ENCODE measurements at regions of chr11 and their contacts with region 1.

Region 1: DNA sequence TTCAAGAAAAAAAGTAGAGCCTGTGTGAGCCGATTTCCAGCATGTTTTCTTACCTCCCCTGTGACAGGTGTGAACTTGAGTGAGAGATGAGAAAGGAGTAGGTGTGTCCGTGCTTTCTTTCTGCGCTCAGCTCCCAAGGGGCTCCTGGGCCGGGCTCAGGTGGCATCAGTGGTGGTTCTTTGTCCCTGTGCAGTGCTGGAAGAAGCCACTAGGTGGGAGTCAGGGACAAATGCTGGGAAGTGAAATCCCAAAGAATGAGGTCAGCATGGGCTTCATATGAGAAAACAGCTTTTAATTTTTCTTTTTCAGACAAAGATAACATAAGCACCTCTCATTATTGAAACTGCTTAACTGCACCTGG is 57.8 kb downstream of the PPFIBP2 start:
- DNase-seq: peak; percentile 43 to 88
- H3K4me3 ChIP-seq: no peak overlapping the region
- H3K27ac ChIP-seq: no peak overlapping the region
- H3K4me1 ChIP-seq: peaks cover 11 to 32% (median 24%) of the 10 kb centered on the region in 4 experiments
- H3K27me3 ChIP-seq: no peaks in the 10 kb centered on the region
- CTCF ChIP-seq: peak; percentile 68 to 90 (median 89)
- EP300 ChIP-seq: no peak
- POLR2A ChIP-seq: no peak
- RAD21 ChIP-seq: peak; percentile 91

Region 2: GRCh38 chr11:7520981-7521487 is 50.6 kb before region 1 on chr11:
- CTCF ChIA-PET with region 1: interaction called, 22 read pairs
- POLR2A ChIA-PET with region 1: no interaction called
- DNase-seq: no peak
- H3K4me3 ChIP-seq: no peak overlapping the region
- H3K27ac ChIP-seq: no peak overlapping the region
- H3K4me1 ChIP-seq: no peaks in the 10 kb centered on the region
- H3K27me3 ChIP-seq: no peaks in the 10 kb centered on the region
- CTCF ChIP-seq: no peak
- EP300 ChIP-seq: no peak
- POLR2A ChIP-seq: no peak
- RAD21 ChIP-seq: no peak

Region 3: GRCh38 chr11:7555052-7555699 is 16.4 kb before region 1 on chr11:
- CTCF ChIA-PET with region 1: interaction called, 54 read pairs
- POLR2A ChIA-PET with region 1: no interaction called
- DNase-seq: no peak
- H3K4me3 ChIP-seq: no peak overlapping the region
- H3K27ac ChIP-seq: no peak overlapping the region
- H3K4me1 ChIP-seq: peaks cover 0 to 3% (median 0%) of the 10 kb centered on the region in 4 experiments; a peak in 2 of 7 replicates
- H3K27me3 ChIP-seq: no peaks in the 10 kb centered on the region
- CTCF ChIP-seq: no peak
- EP300 ChIP-seq: no peak
- POLR2A ChIP-seq: no peak
- RAD21 ChIP-seq: no peak

Region 4: DNA sequence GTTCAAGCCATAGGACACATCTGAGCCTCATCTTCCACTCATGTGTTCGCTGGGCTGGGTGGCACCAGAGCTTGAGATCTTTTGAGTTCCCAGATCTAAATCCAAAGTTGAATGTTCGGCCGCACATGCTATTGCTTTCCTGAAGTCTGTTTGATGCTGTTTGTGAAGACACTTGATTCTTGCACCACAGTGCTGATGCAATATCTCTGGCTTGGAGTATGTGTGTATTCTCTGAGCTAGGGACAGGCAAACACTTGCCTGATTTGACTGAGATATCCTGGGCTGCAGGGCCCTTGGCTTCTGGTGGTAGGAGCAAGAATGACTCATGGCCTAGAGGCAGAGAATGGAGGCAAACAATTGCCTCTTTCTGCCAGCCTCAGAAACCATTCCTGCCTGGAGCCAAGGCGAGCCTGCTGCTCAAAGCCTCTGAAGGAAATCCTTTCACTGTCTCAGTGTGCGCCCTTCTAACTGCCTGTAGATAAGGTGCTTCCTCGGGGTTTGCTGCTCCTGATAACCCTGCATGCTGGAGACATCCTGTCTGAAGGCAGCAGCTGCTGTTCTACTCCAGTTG is 28.7 kb after region 1 on chr11:
- CTCF ChIA-PET with region 1: interaction called, 33 read pairs
- POLR2A ChIA-PET with region 1: interaction called, 5 read pairs
- DNase-seq: no peak
- H3K4me3 ChIP-seq: no peak overlapping the region
- H3K27ac ChIP-seq: no peak overlapping the region
- H3K4me1 ChIP-seq: peaks cover 0 to 7% (median 4%) of the 10 kb centered on the region in 4 experiments; a peak in 3 of 7 replicates
- H3K27me3 ChIP-seq: no peaks in the 10 kb centered on the region
- CTCF ChIP-seq: no peak
- EP300 ChIP-seq: no peak
- POLR2A ChIP-seq: no peak
- RAD21 ChIP-seq: no peak

Region 5: DNA sequence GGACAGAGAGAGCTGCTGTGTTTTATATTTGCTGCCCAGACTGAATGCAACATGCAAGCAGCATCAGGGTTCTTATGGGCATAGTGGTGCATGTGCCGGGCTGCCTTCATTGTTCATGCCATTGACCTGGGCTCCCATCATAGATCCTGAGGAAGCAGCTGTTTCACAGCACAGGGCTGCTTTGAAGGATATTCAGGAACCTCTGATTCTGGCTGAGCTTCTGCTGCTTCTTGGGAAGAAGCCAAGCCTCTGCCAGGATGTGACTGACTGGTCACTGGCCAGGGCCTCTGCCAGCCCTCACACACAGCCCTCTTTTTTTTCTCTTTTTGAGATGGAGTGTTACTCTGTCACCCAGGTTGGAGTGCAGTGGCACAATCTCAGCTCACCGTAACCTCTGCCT is 58.4 kb after region 1 on chr11:
- CTCF ChIA-PET with region 1: interaction called, 27 read pairs
- POLR2A ChIA-PET with region 1: no interaction called
- DNase-seq: no peak
- H3K4me3 ChIP-seq: no peak overlapping the region
- H3K27ac ChIP-seq: no peak overlapping the region
- H3K4me1 ChIP-seq: no peaks in the 10 kb centered on the region
- H3K27me3 ChIP-seq: no peaks in the 10 kb centered on the region
- CTCF ChIP-seq: no peak
- EP300 ChIP-seq: no peak
- POLR2A ChIP-seq: no peak
- RAD21 ChIP-seq: no peak

Region 6: DNA sequence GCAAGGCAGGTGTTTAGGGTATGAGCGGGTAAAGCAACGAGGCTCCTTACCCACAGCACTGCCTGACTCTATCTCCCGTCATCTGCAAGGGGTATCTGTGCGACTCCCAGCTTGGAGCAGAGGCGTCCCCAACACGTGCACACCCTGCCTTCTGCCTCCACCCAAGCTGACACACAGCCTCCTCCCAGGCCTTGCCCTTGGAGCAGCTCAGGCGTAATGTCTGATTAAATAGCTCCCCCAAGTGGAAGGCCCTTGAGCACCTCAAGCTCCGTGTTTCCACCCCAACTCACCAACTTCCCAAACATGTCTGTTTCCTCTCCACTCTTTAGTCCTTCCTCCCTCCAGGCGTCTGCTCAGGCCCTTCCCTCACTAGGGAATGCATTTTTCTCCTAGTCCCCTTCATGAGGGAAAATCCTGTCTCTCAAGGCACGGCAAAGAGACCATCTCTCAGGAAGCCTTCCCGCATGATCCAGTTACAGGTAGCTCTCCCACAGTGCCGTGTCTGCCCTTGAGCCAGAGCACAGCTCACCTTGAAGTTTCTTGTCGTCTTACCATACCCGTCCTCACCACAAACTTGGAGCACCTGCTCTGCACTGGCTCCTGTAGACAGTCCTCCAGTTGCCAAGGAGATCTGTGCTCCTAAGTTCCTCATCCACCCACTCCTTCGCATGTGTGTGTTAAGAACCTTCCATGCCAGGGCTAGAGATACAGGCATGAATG is 85.8 kb after region 1 on chr11:
- CTCF ChIA-PET with region 1: interaction called, 325 read pairs
- POLR2A ChIA-PET with region 1: interaction called, 7 read pairs
- DNase-seq: peak in 1 of 2 experiments; percentile 65
- H3K4me3 ChIP-seq: no peak overlapping the region
- H3K27ac ChIP-seq: no peak overlapping the region
- H3K4me1 ChIP-seq: no peaks in the 10 kb centered on the region
- H3K27me3 ChIP-seq: no peaks in the 10 kb centered on the region
- CTCF ChIP-seq: peak; percentile 74 to 90 (median 89)
- EP300 ChIP-seq: no peak
- POLR2A ChIP-seq: no peak
- RAD21 ChIP-seq: peak; percentile 96 to 97

Region 7: GRCh38 chr11:7672960-7673723 is 101.5 kb after region 1 on chr11 and contains the start of gene CYB5R2:
- CTCF ChIA-PET with region 1: interaction called, 21 read pairs
- POLR2A ChIA-PET with region 1: interaction called, 5 read pairs
- DNase-seq: peak in 1 of 2 experiments; percentile 79
- H3K4me3 ChIP-seq: peak within 1 kb of the TSS; percentile 59 to 94 (median 66)
- H3K27ac ChIP-seq: peak within 1 kb of the TSS; percentile 73; the same call in 1 of the 2 replicates
- H3K4me1 ChIP-seq: peaks cover 0 to 10% (median 4%) of the 10 kb centered on the region in 4 experiments; a peak in 4 of 7 replicates
- H3K27me3 ChIP-seq: no peaks in the 10 kb centered on the region
- CTCF ChIP-seq: no peak
- EP300 ChIP-seq: no peak
- POLR2A ChIP-seq: peak in 1 of 2 experiments; percentile 65; a peak in 2 of 3 replicates
- RAD21 ChIP-seq: no peak
- total RNA-seq, gene CYB5R2: 50.4 and 53.0 TPM in 2 replicates

Region 8: GRCh38 chr11:8247312-8247711 is 675.7 kb after region 1 on chr11:
- CTCF ChIA-PET with region 1: no interaction called
- POLR2A ChIA-PET with region 1: no interaction called
- DNase-seq: peak in 1 of 2 experiments; percentile 75
- H3K4me3 ChIP-seq: no peak overlapping the region
- H3K27ac ChIP-seq: no peak overlapping the region
- H3K4me1 ChIP-seq: peaks cover 7 to 16% (median 11%) of the 10 kb centered on the region in 4 experiments; a peak in 6 of 7 replicates
- H3K27me3 ChIP-seq: peaks cover 0 to 1% (median 0%) of the 10 kb centered on the region in 4 experiments; a peak in 1 of 7 replicates
- CTCF ChIP-seq: peak; percentile 65 to 77 (median 71)
- EP300 ChIP-seq: no peak
- POLR2A ChIP-seq: no peak
- RAD21 ChIP-seq: peak; percentile 64 to 68

Measured in H1 (cell line).